CD8-positive, alpha-beta T cell (primary cell): ENCODE measurements at regions of chr14 and their contacts with region 1.

Region 1: GRCh38 chr14:52791203-52792096 is at the start of gene GNPNAT1:
- DNase-seq: peak; percentile 80 to 97 (median 88)
- ATAC-seq: peak; percentile 96
- H3K4me3 ChIP-seq: peak within 1 kb of the TSS; percentile 78 to 85
- H3K4me3 Mint-ChIP-seq: peak within 1 kb of the TSS; percentile 93
- H3K27ac ChIP-seq: peak within 1 kb of the TSS; percentile 65 to 74
- H3K27ac Mint-ChIP-seq: peak within 1 kb of the TSS; percentile 89
- H3K4me1 ChIP-seq: peaks cover 20% of the 10 kb centered on the region
- H3K4me1 Mint-ChIP-seq: peaks cover 40% of the 10 kb centered on the region
- H3K27me3 ChIP-seq: no peaks in the 10 kb centered on the region
- H3K27me3 Mint-ChIP-seq: no peaks in the 10 kb centered on the region
- CTCF ChIP-seq: no peak
- total RNA-seq, gene GNPNAT1: 5.6 to 7.5 TPM

Region 2: GRCh38 chr14:52706724-52707706 is 84.4 kb before region 1 on chr14 and contains the start of gene PSMC6:
- CTCF ChIA-PET with region 1: interaction called, 3 read pairs
- POLR2A ChIA-PET with region 1: no interaction called
- intact Hi-C with region 1: loop called (anchors 1 kb)
- DNase-seq: peak; percentile 91 to 96 (median 95)
- ATAC-seq: peak; percentile 98
- H3K4me3 ChIP-seq: peak within 1 kb of the TSS; percentile 69 to 88
- H3K4me3 Mint-ChIP-seq: peak within 1 kb of the TSS; percentile 96
- H3K27ac ChIP-seq: peak within 1 kb of the TSS; percentile 66 to 84
- H3K27ac Mint-ChIP-seq: peak within 1 kb of the TSS; percentile 94
- H3K4me1 ChIP-seq: peaks cover 20% of the 10 kb centered on the region
- H3K4me1 Mint-ChIP-seq: peaks cover 33% of the 10 kb centered on the region
- H3K27me3 ChIP-seq: no peaks in the 10 kb centered on the region
- H3K27me3 Mint-ChIP-seq: no peaks in the 10 kb centered on the region
- CTCF ChIP-seq: no peak
- total RNA-seq, gene PSMC6: 108 to 122 TPM

Region 3: DNA sequence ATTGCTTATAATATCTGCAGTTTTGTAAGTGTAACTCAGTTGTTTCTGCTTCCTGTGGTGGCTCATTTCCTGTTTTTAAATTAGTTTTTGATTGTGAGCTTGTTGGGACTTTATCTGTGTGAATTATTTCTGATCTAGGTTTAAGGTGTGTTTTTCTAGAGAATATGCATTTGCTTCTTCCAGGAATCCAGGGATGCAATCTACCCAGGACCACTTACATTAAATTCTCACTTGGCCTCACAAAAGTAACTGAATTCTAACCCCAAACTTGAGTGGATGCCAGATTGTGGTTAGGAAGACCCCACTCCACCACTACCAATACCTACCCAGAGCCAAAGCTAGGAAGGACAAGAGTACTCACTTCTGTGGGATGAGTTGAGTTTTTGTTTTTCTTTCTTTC is 49.6 kb before region 1 on chr14:
- CTCF ChIA-PET with region 1: no interaction called
- POLR2A ChIA-PET with region 1: interaction called, 13 read pairs
- intact Hi-C with region 1: no loop called
- DNase-seq: peak in 2 of 9 experiments; percentile 37 to 69
- ATAC-seq: peak; percentile 56
- H3K4me3 ChIP-seq: peak overlapping the region; percentile 37 to 42
- H3K4me3 Mint-ChIP-seq: peak overlapping the region; percentile 75
- H3K27ac ChIP-seq: peak overlapping the region; percentile 61 to 87
- H3K27ac Mint-ChIP-seq: peak overlapping the region; percentile 98
- H3K4me1 ChIP-seq: peaks cover 63% of the 10 kb centered on the region
- H3K4me1 Mint-ChIP-seq: peaks cover 76% of the 10 kb centered on the region
- H3K27me3 ChIP-seq: no peaks in the 10 kb centered on the region
- H3K27me3 Mint-ChIP-seq: no peaks in the 10 kb centered on the region
- CTCF ChIP-seq: no peak

Region 4: GRCh38 chr14:52918486-52918885 is 127.0 kb after region 1 on chr14:
- CTCF ChIA-PET with region 1: no interaction called
- POLR2A ChIA-PET with region 1: no interaction called
- intact Hi-C with region 1: loop called in 1 of 2 experiments (anchors 5 kb)
- DNase-seq: peak in 5 of 9 experiments; percentile 8 to 85 (median 14)
- ATAC-seq: peak; percentile 95
- H3K4me3 ChIP-seq: no peak overlapping the region
- H3K4me3 Mint-ChIP-seq: no peak overlapping the region
- H3K27ac ChIP-seq: peak overlapping the region; percentile 28 to 84
- H3K27ac Mint-ChIP-seq: peak overlapping the region; percentile 85
- H3K4me1 ChIP-seq: peaks cover 25% of the 10 kb centered on the region
- H3K4me1 Mint-ChIP-seq: peaks cover 33% of the 10 kb centered on the region
- H3K27me3 ChIP-seq: no peaks in the 10 kb centered on the region
- H3K27me3 Mint-ChIP-seq: no peaks in the 10 kb centered on the region
- CTCF ChIP-seq: no peak

Region 5: GRCh38 chr14:53663709-53664108 is 872.3 kb after region 1 on chr14:
- CTCF ChIA-PET with region 1: no interaction called
- POLR2A ChIA-PET with region 1: no interaction called
- intact Hi-C with region 1: no loop called
- DNase-seq: no peak
- ATAC-seq: no peak
- H3K4me3 ChIP-seq: no peak overlapping the region
- H3K4me3 Mint-ChIP-seq: no peak overlapping the region
- H3K27ac ChIP-seq: no peak overlapping the region
- H3K27ac Mint-ChIP-seq: no peak overlapping the region
- H3K4me1 ChIP-seq: no peaks in the 10 kb centered on the region
- H3K4me1 Mint-ChIP-seq: no peaks in the 10 kb centered on the region
- H3K27me3 ChIP-seq: no peaks in the 10 kb centered on the region
- H3K27me3 Mint-ChIP-seq: no peaks in the 10 kb centered on the region
- CTCF ChIP-seq: no peak